ENCODE measurements at regions of chr7 and their contacts with region 1.

Region 1: GRCh38 chr7:159158888-159159405 is 14.3 kb upstream of the VIPR2 start:
- DNase-seq: no peak
- H3K4me3 Mint-ChIP-seq: no peak overlapping the region
- H3K27ac Mint-ChIP-seq: no peak overlapping the region
- H3K4me1 Mint-ChIP-seq: no peaks in the 10 kb centered on the region
- H3K27me3 Mint-ChIP-seq: peaks cover 2% of the 10 kb centered on the region

Region 2: GRCh38 chr7:159127691-159128642 is 31.0 kb before region 1 on chr7:
- CTCF ChIA-PET with region 1: no interaction called
- intact Hi-C with region 1: loop called (anchors 1 kb)
- DNase-seq: no peak
- H3K4me3 Mint-ChIP-seq: no peak overlapping the region
- H3K27ac Mint-ChIP-seq: no peak overlapping the region
- H3K4me1 Mint-ChIP-seq: no peaks in the 10 kb centered on the region
- H3K27me3 Mint-ChIP-seq: peaks cover 5% of the 10 kb centered on the region